ENCODE measurements at regions of chrX and their contacts with region 1.

Region 1: GRCh38 chrX:132505116-132505515 is 16.3 kb upstream of the MBNL3 start:
- DNase-seq: no peak
- ATAC-seq: no peak
- H3K4me3 ChIP-seq: no peak overlapping the region
- H3K27ac ChIP-seq: no peak overlapping the region
- H3K4me1 ChIP-seq: no peaks in the 10 kb centered on the region
- H3K27me3 ChIP-seq: no peaks in the 10 kb centered on the region; the same call in 1 of the 2 replicates
- CTCF ChIP-seq: no peak

Region 2: DNA sequence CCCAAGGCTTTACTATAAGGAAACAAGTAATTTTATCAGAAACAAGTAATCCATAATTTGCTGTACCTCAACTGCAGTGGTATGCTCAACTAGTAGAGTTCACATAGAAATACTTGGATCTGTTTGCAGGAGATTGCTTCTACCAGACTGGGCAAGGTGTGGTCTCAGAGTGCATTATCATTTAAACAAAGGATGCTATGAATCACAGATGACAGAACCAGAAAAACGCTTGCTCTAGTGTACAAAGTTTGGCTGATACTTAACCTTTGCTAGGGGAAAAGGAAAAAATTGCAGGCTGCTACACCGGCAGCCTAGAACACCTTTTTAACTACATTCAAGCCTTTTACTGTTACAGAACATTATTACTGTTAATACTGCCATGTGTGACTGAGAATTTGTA is 1699.2 kb before region 1 on chrX:
- CTCF ChIA-PET with region 1: no interaction called
- POLR2A ChIA-PET with region 1: no interaction called
- in situ Hi-C with region 1: no loop called
- intact Hi-C with region 1: no loop called
- DNase-seq: no peak
- ATAC-seq: no peak
- H3K4me3 ChIP-seq: no peak overlapping the region
- H3K27ac ChIP-seq: no peak overlapping the region
- H3K4me1 ChIP-seq: no peaks in the 10 kb centered on the region
- H3K27me3 ChIP-seq: no peaks in the 10 kb centered on the region
- CTCF ChIP-seq: no peak

Region 3: GRCh38 chrX:132631579-132632232 is 126.6 kb after region 1 on chrX:
- CTCF ChIA-PET with region 1: no interaction called
- POLR2A ChIA-PET with region 1: no interaction called
- in situ Hi-C with region 1: no loop called
- intact Hi-C with region 1: no loop called
- DNase-seq: peak; percentile 30
- ATAC-seq: peak; percentile 81
- H3K4me3 ChIP-seq: no peak overlapping the region
- H3K27ac ChIP-seq: no peak overlapping the region
- H3K4me1 ChIP-seq: no peaks in the 10 kb centered on the region
- H3K27me3 ChIP-seq: peaks cover 20% of the 10 kb centered on the region
- CTCF ChIP-seq: peak; percentile 75

Region 4: DNA sequence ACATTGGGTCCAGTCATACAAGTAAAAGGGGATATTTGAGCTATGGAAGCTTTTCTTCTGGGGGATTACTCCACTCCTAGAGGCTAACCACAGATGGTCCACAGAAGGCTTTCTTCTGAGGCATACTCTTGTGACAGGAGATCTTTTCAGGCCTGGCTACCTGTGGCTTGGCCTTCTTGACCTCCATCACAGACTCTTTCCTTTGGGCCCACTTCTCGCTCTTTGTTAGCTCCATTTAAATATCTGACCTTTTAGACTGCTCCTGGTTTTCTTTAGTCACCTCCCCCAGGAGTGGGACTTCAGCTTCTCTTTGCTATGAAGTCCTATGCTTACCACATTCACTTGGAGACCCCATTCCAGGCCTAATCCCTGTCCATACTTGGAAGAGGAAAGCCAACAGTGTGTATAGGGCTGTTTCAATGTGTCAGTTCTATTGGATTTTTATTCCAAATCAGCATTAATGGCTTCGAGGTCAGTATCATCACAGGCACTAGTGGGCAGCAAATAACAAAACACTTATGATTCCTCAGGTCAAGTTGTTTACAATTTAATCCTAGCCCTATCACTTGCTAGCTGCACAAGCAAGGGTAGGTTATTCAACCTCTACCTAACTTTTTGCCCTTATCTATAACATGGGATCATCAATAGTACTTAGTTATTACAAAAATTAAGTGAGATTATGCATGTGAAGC is 1454.0 kb after region 1 on chrX:
- CTCF ChIA-PET with region 1: no interaction called
- POLR2A ChIA-PET with region 1: interaction called, 16 read pairs
- in situ Hi-C with region 1: no loop called
- intact Hi-C with region 1: no loop called
- DNase-seq: no peak
- ATAC-seq: no peak
- H3K4me3 ChIP-seq: no peak overlapping the region
- H3K27ac ChIP-seq: no peak overlapping the region
- H3K4me1 ChIP-seq: no peaks in the 10 kb centered on the region
- H3K27me3 ChIP-seq: peaks cover 2% of the 10 kb centered on the region; the same call in 1 of the 2 replicates
- CTCF ChIP-seq: no peak; the same call in 1 of the 2 replicates

Measured in Panc1 (cell line).